ENCODE measurements at regions of chr9 and their contacts with region 1.

Region 1: DNA sequence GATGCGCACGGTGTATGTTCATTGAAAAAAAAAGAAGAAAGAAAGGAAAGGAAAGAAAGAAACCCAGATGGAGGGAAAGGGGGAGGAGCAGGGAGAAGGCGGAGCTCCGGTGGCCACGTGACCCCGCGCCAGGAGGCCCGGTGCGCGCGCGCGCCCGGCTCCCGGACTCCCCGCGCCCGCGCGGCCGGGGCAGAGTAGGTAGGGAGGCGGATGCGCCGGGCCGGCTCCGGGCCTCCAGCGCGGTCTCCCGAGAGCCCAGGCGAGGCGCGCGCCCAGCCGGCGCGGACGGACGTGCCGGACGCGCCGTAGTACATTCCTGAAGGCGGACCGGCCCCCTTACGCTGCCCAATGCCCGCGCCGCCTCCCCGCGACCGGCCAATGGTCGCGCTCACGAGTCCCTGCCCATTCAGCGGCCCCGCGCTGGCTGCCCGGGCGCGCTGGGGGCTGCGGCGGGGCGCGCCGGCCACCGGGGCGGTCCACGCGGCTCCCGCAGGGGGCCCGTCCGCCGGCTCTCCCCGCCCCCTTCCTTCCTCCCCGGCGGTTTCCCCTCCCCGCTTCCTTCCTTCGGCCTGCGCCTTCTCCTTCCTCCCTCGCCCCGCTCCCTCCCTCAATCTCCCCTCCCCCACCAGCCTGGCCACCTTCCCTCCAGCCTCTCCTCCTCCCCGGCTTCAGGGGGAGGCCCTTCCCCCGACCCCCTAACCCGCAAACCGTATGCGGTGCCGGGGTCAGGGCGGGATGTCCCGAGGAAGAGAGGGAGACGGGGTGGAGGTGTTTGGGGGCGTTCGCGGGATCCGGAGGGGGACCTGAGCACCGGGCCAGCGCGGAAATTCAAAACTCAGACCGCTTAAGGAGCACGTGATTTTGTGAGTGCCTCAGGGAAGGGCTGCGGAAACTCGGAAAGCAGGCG is 5.8 kb downstream of the PTCH1 start:
- DNase-seq: peak; percentile 90
- H3K4me3 Mint-ChIP-seq: peak overlapping the region; percentile 91
- H3K27ac Mint-ChIP-seq: peak overlapping the region; percentile 90
- H3K4me1 Mint-ChIP-seq: peaks cover 25% of the 10 kb centered on the region
- H3K27me3 Mint-ChIP-seq: peaks cover 10% of the 10 kb centered on the region

Region 2: GRCh38 chr9:94726495-94727191 is 784.3 kb before region 1 on chr9 and contains the start of gene AOPEP:
- CTCF ChIA-PET with region 1: no interaction called
- intact Hi-C with region 1: loop called (anchors 10 kb)
- DNase-seq: peak; percentile 99
- H3K4me3 Mint-ChIP-seq: peak within 1 kb of the TSS; percentile 99
- H3K27ac Mint-ChIP-seq: peak within 1 kb of the TSS; percentile 95
- H3K4me1 Mint-ChIP-seq: peaks cover 12% of the 10 kb centered on the region
- H3K27me3 Mint-ChIP-seq: no peaks in the 10 kb centered on the region
- total RNA-seq, gene AOPEP: 5.8 to 6.4 TPM

Region 3: DNA sequence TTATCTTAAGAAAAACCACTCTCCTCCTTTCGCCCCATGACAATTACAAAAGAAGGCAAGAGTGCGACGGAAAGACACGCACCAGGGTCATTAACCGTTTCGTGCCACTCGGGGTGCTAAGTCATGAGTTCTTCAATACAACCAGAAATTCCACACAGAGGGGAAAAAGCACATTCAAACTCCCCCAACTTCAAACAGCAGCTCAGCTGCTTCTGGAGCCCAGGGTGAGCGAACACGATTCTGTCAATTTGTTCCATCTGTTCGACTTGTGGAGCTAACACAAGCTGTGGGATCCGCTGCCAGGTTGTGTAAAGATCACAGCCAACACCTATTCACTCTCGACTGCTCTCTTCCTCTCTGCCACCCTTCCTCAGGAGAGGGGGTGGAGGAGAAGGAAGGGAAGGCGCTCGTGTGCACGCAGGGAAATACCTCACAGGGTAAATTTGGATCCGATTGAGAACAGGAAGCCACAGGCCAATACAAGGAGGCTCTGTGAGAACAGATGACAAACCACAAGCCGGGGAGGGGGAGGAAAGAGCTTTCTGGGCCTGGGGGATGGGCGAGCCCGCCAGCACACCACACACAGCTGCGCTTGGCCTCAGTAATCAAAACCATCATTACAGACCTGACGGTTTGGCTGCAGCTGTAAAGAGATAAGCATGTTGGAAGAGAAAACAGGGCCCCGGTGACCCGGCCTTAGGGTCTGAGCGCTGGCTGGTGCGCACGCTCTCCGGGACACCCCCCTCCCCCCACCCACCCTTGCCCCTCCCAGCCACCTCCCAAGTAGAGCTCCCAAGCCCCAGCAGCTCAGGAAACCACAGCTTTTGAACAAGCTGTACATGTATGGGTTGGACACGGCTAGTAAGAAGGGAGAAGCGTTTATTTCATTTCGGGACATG is 48.5 kb before region 1 on chr9:
- CTCF ChIA-PET with region 1: no interaction called
- intact Hi-C with region 1: loop called (anchors 1 kb)
- DNase-seq: peak; percentile 91
- H3K4me3 Mint-ChIP-seq: peak overlapping the region; percentile 73
- H3K27ac Mint-ChIP-seq: no peak overlapping the region
- H3K4me1 Mint-ChIP-seq: peaks cover 30% of the 10 kb centered on the region
- H3K27me3 Mint-ChIP-seq: no peaks in the 10 kb centered on the region

Region 4: GRCh38 chr9:95726756-95727155 is 215.8 kb after region 1 on chr9:
- CTCF ChIA-PET with region 1: no interaction called
- intact Hi-C with region 1: loop called (anchors 1 kb)
- DNase-seq: no peak
- H3K4me3 Mint-ChIP-seq: no peak overlapping the region
- H3K27ac Mint-ChIP-seq: no peak overlapping the region
- H3K4me1 Mint-ChIP-seq: peaks cover 34% of the 10 kb centered on the region
- H3K27me3 Mint-ChIP-seq: peaks cover 3% of the 10 kb centered on the region

Region 5: GRCh38 chr9:96061293-96061987 is 550.5 kb after region 1 on chr9:
- CTCF ChIA-PET with region 1: no interaction called
- intact Hi-C with region 1: loop called (anchors 5 kb)
- DNase-seq: peak; percentile 72
- H3K4me3 Mint-ChIP-seq: no peak overlapping the region
- H3K27ac Mint-ChIP-seq: no peak overlapping the region
- H3K4me1 Mint-ChIP-seq: peaks cover 8% of the 10 kb centered on the region
- H3K27me3 Mint-ChIP-seq: no peaks in the 10 kb centered on the region